ENCODE measurements at regions of chr2 and their contacts with region 1.

Region 1: DNA sequence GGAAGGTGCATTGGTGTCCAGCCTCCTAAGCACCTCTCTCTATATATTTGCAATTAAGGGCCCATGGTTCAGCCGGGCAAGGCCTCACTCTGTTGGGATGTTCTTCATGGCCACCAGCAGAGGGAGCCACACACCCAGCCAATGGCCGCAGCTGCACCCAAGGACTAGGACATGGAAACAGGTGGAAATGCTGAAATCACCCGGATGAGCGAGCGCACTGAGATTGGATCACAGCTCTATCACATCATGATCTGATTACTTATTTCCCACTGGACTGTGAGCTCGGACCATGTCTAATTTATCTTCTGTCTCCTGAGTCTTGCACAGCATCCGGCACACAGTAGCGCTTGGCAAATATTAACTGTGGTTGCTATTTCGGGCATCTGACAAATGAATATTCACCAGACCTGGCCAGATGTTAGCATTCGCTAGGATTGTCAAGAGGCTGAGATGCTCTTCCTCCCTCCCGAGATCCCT is 31.2 kb downstream of the KIF3C start:
- DNase-seq: peak; percentile 90
- H3K4me3 Mint-ChIP-seq: no peak overlapping the region
- H3K27ac Mint-ChIP-seq: no peak overlapping the region
- H3K4me1 Mint-ChIP-seq: peaks cover 3% of the 10 kb centered on the region
- H3K27me3 Mint-ChIP-seq: no peaks in the 10 kb centered on the region

Region 2: GRCh38 chr2:25878361-25879132 is 72.6 kb before region 1 on chr2 and contains the start of gene ASXL2:
- intact Hi-C with region 1: no loop called
- DNase-seq: peak; percentile 99
- H3K4me3 Mint-ChIP-seq: peak within 1 kb of the TSS; percentile 96
- H3K27ac Mint-ChIP-seq: peak within 1 kb of the TSS; percentile 96
- H3K4me1 Mint-ChIP-seq: peaks cover 38% of the 10 kb centered on the region
- H3K27me3 Mint-ChIP-seq: peaks cover 4% of the 10 kb centered on the region
- total RNA-seq, gene ASXL2: 57.1 and 57.4 TPM in 2 replicates

Region 3: GRCh38 chr2:25991965-25992364 is 40.9 kb after region 1 on chr2:
- intact Hi-C with region 1: loop called (anchors 1 kb)
- DNase-seq: no peak
- H3K4me3 Mint-ChIP-seq: no peak overlapping the region
- H3K27ac Mint-ChIP-seq: no peak overlapping the region
- H3K4me1 Mint-ChIP-seq: peaks cover 6% of the 10 kb centered on the region
- H3K27me3 Mint-ChIP-seq: peaks cover 6% of the 10 kb centered on the region

Region 4: DNA sequence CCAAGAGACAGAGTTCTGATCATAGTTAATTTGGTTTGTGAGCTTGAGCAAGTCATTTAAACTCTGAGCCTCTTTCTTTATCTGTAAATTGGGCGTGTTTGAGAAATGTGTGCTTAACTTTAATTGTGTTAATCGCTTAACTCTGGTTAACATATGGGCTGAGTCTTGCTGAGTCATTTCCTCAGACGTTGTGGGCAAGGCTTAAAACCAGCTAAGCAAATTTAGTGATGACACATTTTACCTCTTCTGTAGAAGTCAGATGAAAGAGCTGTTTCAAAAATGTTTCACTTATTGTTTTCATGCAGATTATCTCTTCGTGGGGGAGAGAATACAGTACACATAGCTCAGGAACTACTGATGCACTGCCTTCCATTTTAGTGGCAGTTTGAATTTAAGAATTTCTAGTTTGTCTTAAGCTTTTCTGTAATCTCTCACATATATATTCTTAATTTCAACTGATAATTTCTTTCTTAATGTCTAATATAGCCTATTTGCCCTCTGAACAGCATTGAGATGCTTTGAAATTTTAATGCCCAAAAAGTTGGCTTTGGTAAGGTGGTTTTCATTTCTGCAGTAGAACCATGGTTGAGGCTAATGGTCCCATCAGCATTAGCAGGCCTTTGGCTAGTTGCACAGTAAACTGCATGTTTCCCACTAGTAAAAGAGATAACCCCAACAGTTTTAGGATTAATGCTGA is 117.6 kb after region 1 on chr2:
- intact Hi-C with region 1: no loop called
- DNase-seq: peak; percentile 87
- H3K4me3 Mint-ChIP-seq: peak overlapping the region; percentile 58
- H3K27ac Mint-ChIP-seq: peak overlapping the region; percentile 89
- H3K4me1 Mint-ChIP-seq: peaks cover 46% of the 10 kb centered on the region
- H3K27me3 Mint-ChIP-seq: no peaks in the 10 kb centered on the region

Region 5: DNA sequence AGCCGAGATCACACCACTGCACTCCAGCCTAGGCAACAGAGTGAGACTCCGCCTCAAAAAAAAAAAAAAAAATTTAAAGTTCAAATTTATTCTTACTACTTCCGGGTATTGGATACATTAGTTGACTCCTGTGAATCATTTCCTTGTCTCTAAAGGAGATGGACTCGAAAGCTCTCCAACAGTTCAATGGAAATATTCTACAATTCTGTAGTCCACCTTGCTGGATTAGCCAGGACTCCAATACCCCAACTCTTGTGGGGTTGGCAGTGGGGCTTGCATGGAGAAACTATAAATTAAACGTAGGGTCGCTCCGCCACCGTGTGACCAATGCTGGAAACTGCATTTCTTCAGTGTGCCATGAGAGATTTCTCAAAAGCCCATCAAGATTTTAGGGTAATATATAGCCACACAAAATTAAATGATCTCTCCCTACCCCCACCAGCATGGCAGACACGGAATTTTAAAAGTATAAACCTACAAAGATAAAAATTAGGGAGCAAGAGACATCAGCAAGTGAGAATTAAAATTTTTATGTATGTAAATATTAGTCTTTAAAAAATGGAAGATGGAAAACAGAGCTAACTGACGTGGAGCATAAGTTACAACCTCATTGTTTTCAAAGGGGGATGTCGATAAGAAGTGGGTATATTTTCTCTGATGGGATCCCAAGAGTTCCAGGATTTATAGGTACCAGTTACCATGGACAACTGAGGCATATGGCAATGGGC is 194.0 kb after region 1 on chr2:
- intact Hi-C with region 1: loop called (anchors 1 kb)
- DNase-seq: peak; percentile 89
- H3K4me3 Mint-ChIP-seq: no peak overlapping the region
- H3K27ac Mint-ChIP-seq: no peak overlapping the region
- H3K4me1 Mint-ChIP-seq: peaks cover 3% of the 10 kb centered on the region
- H3K27me3 Mint-ChIP-seq: peaks cover 9% of the 10 kb centered on the region

Region 6: GRCh38 chr2:26412091-26412673 is 461.1 kb after region 1 on chr2:
- intact Hi-C with region 1: no loop called
- DNase-seq: peak; percentile 76
- H3K4me3 Mint-ChIP-seq: peak overlapping the region; percentile 65
- H3K27ac Mint-ChIP-seq: peak overlapping the region; percentile 26
- H3K4me1 Mint-ChIP-seq: peaks cover 14% of the 10 kb centered on the region
- H3K27me3 Mint-ChIP-seq: peaks cover 16% of the 10 kb centered on the region

Region 7: DNA sequence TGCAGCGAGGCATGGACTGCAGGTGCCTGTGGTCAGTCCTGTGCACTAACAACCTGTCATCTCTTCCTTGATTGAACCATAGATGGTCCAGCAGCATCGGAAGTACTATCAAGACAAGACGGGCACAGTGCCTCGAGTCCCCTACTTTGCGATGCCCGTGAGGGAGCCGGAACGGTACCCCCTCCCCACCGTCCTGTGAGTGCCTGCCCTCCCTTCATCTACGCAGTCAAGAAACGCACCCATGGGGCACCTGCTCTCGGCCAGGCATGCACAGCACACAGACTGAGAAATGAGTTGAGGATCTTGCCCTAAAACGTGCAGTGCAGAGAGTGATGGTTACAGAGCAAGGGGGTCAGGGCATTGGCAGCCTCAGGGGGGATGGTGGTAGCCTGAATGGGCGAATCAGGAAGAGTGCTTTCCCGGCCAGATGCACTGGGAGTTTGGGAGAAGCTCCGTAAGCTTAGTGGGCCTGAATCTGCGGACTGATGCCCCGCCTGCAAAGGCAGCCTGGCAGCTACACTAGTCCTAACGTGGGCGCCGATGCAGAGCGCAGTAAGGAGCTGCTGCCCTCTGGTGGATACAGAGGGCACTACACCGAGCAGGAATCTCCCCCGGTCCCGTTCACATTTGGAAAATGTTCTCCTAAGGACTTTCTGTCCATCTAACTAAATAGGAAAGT is 626.5 kb after region 1 on chr2:
- intact Hi-C with region 1: loop called (anchors 5 kb)
- DNase-seq: peak; percentile 89
- H3K4me3 Mint-ChIP-seq: no peak overlapping the region
- H3K27ac Mint-ChIP-seq: no peak overlapping the region
- H3K4me1 Mint-ChIP-seq: peaks cover 3% of the 10 kb centered on the region
- H3K27me3 Mint-ChIP-seq: peaks cover 8% of the 10 kb centered on the region

Measured in activated CD4-positive, alpha-beta T cell treated with anti-CD3 and anti-CD28 coated beads, Interleukin-2, amount 10 ng/mL, durations not matched to agents 24 days and 14 days (primary cell).